Mammary epithelial cell (primary cell): ENCODE measurements at regions of chr17 and their contacts with region 1.

Region 1: DNA sequence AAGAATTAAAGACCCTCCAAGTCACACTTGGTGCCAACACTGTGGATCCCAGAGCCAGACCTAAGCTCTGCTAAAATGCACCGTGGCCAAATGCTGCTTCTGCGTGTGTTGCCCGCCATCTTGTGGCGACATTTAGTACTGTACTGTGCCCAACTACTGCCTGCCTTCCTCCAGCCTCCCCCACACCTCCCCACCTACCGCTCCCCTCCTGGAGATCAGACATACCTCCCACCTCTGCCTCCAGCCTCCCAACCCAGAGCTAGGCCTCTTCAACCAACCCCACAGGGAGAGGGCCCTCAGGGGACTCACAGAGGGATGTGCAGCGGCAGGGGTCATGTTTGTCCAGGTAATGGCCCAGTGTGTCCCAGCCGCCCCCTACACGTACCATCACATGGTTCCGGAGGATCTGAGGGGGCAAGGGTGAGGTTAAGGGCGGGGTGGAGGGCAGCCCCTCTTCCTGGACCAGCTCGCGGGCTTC is 5.5 kb downstream of the GAS2L2 start:
- DNase-seq: peak; percentile 50
- H3K4me3 ChIP-seq: no peak overlapping the region
- H3K27ac ChIP-seq: no peak overlapping the region
- H3K4me1 ChIP-seq: peaks cover 33% of the 10 kb centered on the region
- H3K27me3 ChIP-seq: no peaks in the 10 kb centered on the region
- CTCF ChIP-seq: peak; percentile 84 to 92

Region 2: GRCh38 chr17:34199932-34200534 is 1547.5 kb before region 1 on chr17:
- CTCF ChIA-PET with region 1: no interaction called
- dilution Hi-C with region 1: no loop called
- in situ Hi-C with region 1: no loop called
- intact Hi-C with region 1: loop called (anchors 10 kb)
- DNase-seq: peak; percentile 50
- H3K4me3 ChIP-seq: no peak overlapping the region
- H3K27ac ChIP-seq: no peak overlapping the region
- H3K4me1 ChIP-seq: no peaks in the 10 kb centered on the region
- H3K27me3 ChIP-seq: no peaks in the 10 kb centered on the region
- CTCF ChIP-seq: peak; percentile 100

Region 3: GRCh38 chr17:35170968-35171771 is 576.4 kb before region 1 on chr17:
- CTCF ChIA-PET with region 1: no interaction called
- dilution Hi-C with region 1: no loop called
- in situ Hi-C with region 1: loop called (anchors 25 kb)
- intact Hi-C with region 1: loop called (anchors 1 kb)
- DNase-seq: peak; percentile 17
- H3K4me3 ChIP-seq: no peak overlapping the region
- H3K27ac ChIP-seq: no peak overlapping the region
- H3K4me1 ChIP-seq: peaks cover 7% of the 10 kb centered on the region
- H3K27me3 ChIP-seq: no peaks in the 10 kb centered on the region
- CTCF ChIP-seq: peak; percentile 20 to 36

Region 4: DNA sequence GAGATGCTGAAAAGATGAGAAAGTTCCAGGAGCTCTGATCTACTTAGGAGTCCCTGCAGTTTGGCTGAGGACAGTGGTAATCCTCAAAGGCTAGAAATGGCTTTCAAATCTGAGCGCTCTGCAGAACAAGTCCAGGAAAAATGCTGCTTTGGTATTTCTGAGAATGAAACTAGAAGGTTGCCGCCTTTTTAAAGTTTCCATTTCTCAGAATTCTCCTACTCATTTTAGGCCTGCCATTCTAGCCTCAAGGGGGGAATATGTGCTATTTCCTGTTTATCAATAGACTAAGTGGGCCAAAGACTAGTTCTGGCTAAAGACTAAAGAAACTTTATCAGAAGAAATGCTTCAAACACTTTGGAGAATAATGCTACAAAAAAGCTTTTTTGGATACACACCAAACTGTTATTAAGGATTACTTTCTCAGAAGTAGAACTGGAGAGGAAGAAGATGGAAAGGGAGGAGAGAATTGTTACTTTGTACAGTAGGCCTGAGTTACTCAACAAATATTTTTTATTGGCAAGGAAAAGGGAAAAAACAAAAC is 209.9 kb before region 1 on chr17 and contains the start of gene SLFN12L:
- CTCF ChIA-PET with region 1: no interaction called
- dilution Hi-C with region 1: no loop called
- in situ Hi-C with region 1: no loop called
- intact Hi-C with region 1: loop called (anchors 1 kb)
- DNase-seq: no peak
- H3K4me3 ChIP-seq: no peak within 1 kb of the TSS
- H3K27ac ChIP-seq: no peak within 1 kb of the TSS
- H3K4me1 ChIP-seq: no peaks in the 10 kb centered on the region
- H3K27me3 ChIP-seq: peaks cover 2% of the 10 kb centered on the region
- CTCF ChIP-seq: no peak
- total RNA-seq, gene SLFN12L: 0.12 to 0.17 TPM

Region 5: GRCh38 chr17:35612924-35613521 is 134.6 kb before region 1 on chr17:
- CTCF ChIA-PET with region 1: interaction called, 3 read pairs
- dilution Hi-C with region 1: loop called (anchors 25 kb)
- in situ Hi-C with region 1: no loop called
- intact Hi-C with region 1: loop called (anchors 1 kb)
- DNase-seq: peak; percentile 20
- H3K4me3 ChIP-seq: no peak overlapping the region
- H3K27ac ChIP-seq: no peak overlapping the region
- H3K4me1 ChIP-seq: no peaks in the 10 kb centered on the region
- H3K27me3 ChIP-seq: no peaks in the 10 kb centered on the region
- CTCF ChIP-seq: peak; percentile 61 to 64